ENCODE measurements at regions of chr12 and their contacts with region 1.

Region 1: DNA sequence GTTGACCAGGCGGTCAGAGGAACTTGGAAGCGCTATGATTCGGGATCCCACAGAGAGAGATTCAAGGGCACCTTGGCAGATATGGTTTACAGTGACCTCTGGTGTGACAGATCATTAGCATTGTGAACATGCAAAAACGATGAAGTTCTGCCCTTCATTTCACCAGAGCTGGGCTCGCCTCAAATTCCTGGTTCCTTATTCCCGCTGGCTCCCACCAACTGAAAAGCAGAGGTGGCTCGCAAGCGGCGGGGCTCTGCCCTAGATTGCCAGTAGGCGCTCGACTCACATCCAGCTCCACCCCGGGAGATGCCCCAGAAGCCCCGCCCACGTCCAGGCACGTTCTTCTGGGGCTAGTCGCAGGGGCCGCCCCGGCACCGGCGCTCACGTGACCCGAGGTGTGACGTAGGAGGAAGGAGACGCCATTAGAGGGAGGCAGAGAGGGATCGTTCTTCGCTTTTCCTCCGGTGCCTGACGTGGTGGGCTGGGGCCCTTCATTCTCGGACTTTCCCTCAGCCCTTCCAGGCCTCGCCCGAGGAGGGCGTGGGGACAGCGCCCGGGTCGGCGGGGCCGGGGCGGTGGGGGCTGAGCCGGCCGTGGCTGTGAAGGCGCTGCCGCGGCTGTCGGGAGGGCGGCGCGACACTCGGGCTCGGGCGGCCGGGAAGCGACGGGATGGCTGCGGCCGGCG is at the start of gene RAB21:
- DNase-seq: peak; percentile 100
- H3K4me3 ChIP-seq: peak within 1 kb of the TSS; percentile 74
- H3K27ac ChIP-seq: peak within 1 kb of the TSS; percentile 86
- H3K4me1 ChIP-seq: no peaks in the 10 kb centered on the region
- H3K27me3 ChIP-seq: no peaks in the 10 kb centered on the region
- CTCF ChIP-seq: peak; percentile 21
- total RNA-seq, gene RAB21: 52.5 to 75.1 TPM

Region 2: GRCh38 chr12:71663561-71664294 is 90.9 kb before region 1 on chr12 and contains the start of gene ZFC3H1:
- intact Hi-C with region 1: loop called (anchors 10 kb)
- DNase-seq: peak; percentile 97
- H3K4me3 ChIP-seq: peak within 1 kb of the TSS; percentile 82
- H3K27ac ChIP-seq: peak within 1 kb of the TSS; percentile 100
- H3K4me1 ChIP-seq: peaks cover 22% of the 10 kb centered on the region
- H3K27me3 ChIP-seq: no peaks in the 10 kb centered on the region
- CTCF ChIP-seq: no peak
- total RNA-seq, gene ZFC3H1: 37.8 to 38.8 TPM

Region 3: GRCh38 chr12:72148709-72149108 is 394.1 kb after region 1 on chr12:
- intact Hi-C with region 1: no loop called
- DNase-seq: no peak
- H3K4me3 ChIP-seq: no peak overlapping the region
- H3K27ac ChIP-seq: no peak overlapping the region
- H3K4me1 ChIP-seq: no peaks in the 10 kb centered on the region
- H3K27me3 ChIP-seq: no peaks in the 10 kb centered on the region
- CTCF ChIP-seq: no peak